Activated CD4-positive, alpha-beta T cell treated with anti-CD3 and anti-CD28 coated beads for 36 hours (primary cell): ENCODE measurements at regions of chr4 and their contacts with region 1.

Region 1: DNA sequence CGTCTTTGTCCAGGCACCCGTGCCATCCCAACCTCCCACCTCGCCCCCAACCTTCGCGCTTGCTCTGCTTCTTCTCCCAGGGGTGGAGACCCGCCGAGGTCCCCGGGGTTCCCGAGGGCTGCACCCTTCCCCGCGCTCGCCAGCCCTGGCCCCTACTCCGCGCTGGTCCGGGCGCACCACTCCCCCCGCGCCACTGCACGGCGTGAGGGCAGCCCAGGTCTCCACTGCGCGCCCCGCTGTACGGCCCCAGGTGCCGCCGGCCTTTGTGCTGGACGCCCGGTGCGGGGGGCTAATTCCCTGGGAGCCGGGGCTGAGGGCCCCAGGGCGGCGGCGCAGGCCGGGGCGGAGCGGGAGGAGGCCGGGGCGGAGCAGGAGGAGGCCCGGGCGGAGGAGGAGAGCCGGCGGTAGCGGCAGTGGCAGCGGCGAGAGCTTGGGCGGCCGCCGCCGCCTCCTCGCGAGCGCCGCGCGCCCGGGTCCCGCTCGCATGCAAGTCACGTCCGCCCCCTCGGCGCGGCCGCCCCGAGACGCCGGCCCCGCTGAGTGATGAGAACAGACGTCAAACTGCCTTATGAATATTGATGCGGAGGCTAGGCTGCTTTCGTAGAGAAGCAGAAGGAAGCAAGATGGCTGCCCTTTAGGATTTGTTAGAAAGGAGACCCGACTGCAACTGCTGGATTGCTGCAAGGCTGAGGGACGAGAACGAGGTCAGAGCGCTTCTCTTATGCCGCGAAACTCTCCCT is at the start of gene TET2:
- DNase-seq: peak; percentile 91
- ATAC-seq: peak; percentile 87
- H3K4me3 Mint-ChIP-seq: peak within 1 kb of the TSS; percentile 97
- H3K27ac Mint-ChIP-seq: peak within 1 kb of the TSS; percentile 98
- H3K4me1 Mint-ChIP-seq: peaks cover 40% of the 10 kb centered on the region
- H3K27me3 Mint-ChIP-seq: no peaks in the 10 kb centered on the region
- total RNA-seq, gene TET2: 35.0 to 40.6 TPM

Region 2: DNA sequence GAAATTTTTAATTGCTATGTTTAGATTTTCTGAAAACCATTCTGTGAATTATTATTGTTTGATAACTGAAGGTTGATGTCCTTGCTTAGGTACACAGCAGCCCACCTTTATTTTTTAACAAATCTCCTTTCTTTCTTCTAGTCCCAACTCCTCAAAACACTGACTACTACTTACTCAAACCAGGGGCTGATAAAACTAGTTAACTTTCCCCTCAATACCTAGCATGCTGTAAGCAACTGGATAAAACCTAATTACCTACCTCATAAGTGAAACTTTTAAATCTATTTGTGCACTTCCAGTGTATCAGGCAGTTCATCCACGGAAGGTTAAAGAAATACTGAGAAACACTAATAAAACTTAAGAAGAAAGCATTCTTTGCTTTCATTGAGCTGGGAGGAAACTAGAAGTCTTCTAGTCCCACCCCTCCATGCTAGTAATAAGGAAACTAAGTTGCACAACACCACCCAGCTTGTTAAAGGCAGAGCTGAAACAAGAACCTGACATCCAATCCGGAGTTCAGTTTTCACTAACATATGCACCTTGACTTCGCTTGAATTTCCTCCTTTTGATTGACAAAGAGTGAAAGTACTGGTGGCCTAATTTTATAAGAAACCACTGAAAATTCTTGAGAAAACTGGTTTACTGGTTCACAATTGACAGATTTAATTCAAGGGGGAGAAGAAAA is 180.0 kb before region 1 on chr4:
- CTCF ChIA-PET with region 1: no interaction called
- POLR2A ChIA-PET with region 1: no interaction called
- intact Hi-C with region 1: loop called in 1 of 2 experiments (anchors 2 kb)
- DNase-seq: peak; percentile 61
- ATAC-seq: peak; percentile 97
- H3K4me3 Mint-ChIP-seq: peak overlapping the region; percentile 43
- H3K27ac Mint-ChIP-seq: peak overlapping the region; percentile 98
- H3K4me1 Mint-ChIP-seq: peaks cover 18% of the 10 kb centered on the region
- H3K27me3 Mint-ChIP-seq: peaks cover 5% of the 10 kb centered on the region

Region 3: GRCh38 chr4:105191621-105192210 is 45.3 kb after region 1 on chr4:
- CTCF ChIA-PET with region 1: no interaction called
- POLR2A ChIA-PET with region 1: no interaction called
- intact Hi-C with region 1: loop called (anchors 1 to 2 kb)
- DNase-seq: peak; percentile 11
- ATAC-seq: peak; percentile 70
- H3K4me3 Mint-ChIP-seq: peak overlapping the region; percentile 12
- H3K27ac Mint-ChIP-seq: peak overlapping the region; percentile 90
- H3K4me1 Mint-ChIP-seq: peaks cover 94% of the 10 kb centered on the region
- H3K27me3 Mint-ChIP-seq: no peaks in the 10 kb centered on the region

Region 4: GRCh38 chr4:105215609-105216313 is 69.3 kb after region 1 on chr4:
- CTCF ChIA-PET with region 1: no interaction called
- POLR2A ChIA-PET with region 1: no interaction called
- intact Hi-C with region 1: loop called (anchors 2 kb)
- DNase-seq: no peak
- ATAC-seq: peak; percentile 95
- H3K4me3 Mint-ChIP-seq: peak overlapping the region; percentile 20
- H3K27ac Mint-ChIP-seq: peak overlapping the region; percentile 78
- H3K4me1 Mint-ChIP-seq: peaks cover 49% of the 10 kb centered on the region
- H3K27me3 Mint-ChIP-seq: no peaks in the 10 kb centered on the region

Region 5: DNA sequence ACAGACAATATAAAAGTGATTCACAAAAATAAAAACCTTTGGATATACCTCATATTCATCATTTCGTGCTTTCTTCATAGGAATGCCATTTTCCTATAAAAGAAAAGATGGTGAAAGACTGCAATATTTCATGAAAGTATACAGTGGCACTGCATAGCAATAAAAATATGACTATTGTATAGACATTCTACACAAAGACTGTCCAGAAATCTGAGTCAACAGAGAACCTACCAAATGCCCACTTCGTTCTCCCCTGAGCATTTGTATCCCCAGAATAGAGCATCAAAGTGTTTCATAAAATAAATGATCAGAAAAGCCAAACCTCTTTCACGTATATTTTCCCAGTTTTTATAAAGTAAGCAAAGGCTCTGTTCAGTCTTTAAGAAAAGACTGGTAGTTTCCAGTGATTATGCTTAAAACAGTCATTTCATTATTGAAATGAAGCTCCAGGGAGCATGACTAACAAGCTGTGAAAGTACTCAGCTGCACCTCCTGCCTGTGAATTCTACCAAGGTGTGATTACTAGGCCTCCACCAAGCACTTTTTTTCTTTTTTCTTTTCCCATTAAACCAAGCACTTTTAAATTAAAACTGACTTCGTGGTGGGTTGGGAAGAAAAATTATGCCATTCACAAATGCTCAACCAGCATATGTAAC is 307.2 kb after region 1 on chr4:
- CTCF ChIA-PET with region 1: no interaction called
- POLR2A ChIA-PET with region 1: no interaction called
- intact Hi-C with region 1: loop called (anchors 1 to 5 kb)
- DNase-seq: peak; percentile 60
- ATAC-seq: peak; percentile 99
- H3K4me3 Mint-ChIP-seq: no peak overlapping the region
- H3K27ac Mint-ChIP-seq: peak overlapping the region; percentile 62
- H3K4me1 Mint-ChIP-seq: peaks cover 34% of the 10 kb centered on the region
- H3K27me3 Mint-ChIP-seq: no peaks in the 10 kb centered on the region

Region 6: DNA sequence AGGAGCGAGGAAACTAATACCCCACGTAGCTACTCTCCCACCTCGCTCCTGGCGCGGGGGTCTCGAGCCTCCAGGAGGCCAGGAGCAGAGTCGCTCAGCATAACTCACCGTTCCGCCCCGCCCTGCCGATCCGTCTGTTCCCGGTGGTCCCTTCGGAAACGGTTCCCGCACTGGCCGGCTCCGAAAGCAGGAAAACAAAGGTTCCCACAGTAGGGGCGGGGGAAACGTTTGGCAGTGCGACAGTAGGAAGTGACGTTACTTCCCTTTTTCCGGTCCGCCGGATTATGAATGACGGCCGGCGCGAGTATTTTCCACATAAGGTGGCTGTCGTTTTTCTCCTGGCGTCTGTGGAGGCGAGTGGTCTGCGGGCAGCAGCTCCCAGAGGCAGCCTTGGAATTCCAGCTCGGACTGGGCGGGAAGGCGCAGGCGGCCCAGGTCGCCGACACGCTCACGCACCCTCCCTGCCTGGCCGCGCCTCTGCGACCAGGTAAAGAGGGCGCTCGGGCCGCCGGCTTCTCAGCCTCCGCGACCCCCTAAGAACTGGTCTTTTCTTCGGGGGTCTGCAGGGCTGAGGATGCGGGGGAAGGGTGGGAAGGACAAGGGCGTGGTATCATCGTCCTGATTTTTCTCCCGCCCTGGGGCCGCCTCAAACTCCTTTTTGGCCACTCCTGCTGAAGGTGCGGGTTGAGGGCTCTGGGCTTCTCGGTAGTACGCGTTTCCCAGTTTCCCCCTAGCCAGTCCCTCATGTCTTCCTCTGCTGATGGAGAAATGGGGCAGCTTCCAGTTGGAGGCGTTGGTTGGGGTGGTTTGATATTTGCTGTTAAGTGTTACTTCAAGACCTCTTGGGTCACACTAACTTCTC is 562.3 kb after region 1 on chr4 and contains the starts of genes GSTCD and INTS12:
- CTCF ChIA-PET with region 1: no interaction called
- POLR2A ChIA-PET with region 1: no interaction called
- intact Hi-C with region 1: loop called (anchors 2 to 5 kb)
- DNase-seq: peak; percentile 93
- ATAC-seq: peak; percentile 93
- H3K4me3 Mint-ChIP-seq: peak within 1 kb of the TSS; percentile 98
- H3K27ac Mint-ChIP-seq: peak within 1 kb of the TSS; percentile 96
- H3K4me1 Mint-ChIP-seq: peaks cover 26% of the 10 kb centered on the region
- H3K27me3 Mint-ChIP-seq: no peaks in the 10 kb centered on the region
- total RNA-seq, gene GSTCD: 16.1 to 16.3 TPM
- total RNA-seq, gene INTS12: 20.2 to 28.4 TPM

Region 7: DNA sequence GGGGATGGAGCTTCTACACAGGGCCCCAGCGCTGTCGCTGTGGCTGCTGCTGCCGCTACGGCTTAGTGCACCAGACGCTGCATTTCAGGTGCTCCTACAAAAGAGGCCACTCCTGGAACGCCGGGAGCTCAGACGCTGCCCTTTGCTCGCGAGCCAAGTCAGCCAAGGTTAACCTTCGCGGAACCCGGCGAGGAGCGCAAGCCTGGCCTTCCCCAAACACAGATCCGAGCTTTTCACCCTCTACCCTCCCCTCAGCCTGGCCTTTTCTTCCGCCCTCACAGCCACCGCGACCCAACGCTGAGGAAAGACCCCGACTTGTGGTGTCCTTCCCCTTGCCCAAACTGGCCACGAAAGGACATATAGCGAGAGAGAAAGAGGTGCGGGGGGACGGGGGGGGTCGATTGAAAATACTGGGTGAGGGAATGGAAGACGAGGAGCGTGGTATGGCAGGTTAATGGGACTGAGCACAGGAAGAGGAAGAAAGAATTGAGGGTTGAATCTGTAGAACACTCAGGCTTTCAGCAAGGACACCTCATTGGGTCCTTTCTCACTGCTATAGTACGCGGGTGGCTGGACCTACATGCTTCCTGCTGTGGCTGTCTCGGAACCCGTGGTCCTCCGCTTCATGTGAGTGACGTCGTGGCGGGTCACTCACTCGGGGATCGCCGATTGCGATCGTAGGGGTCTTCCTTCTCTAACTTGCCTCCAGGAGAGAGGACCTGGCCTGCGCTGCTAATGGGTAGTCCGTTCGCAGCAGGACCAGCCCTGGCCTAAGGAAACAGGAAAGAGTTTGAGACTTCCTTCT is 1169.7 kb after region 1 on chr4 and contains the starts of genes AIMP1 and TBCK:
- CTCF ChIA-PET with region 1: no interaction called
- POLR2A ChIA-PET with region 1: no interaction called
- intact Hi-C with region 1: loop called in 1 of 2 experiments (anchors 2 kb)
- DNase-seq: peak; percentile 91
- ATAC-seq: peak; percentile 83
- H3K4me3 Mint-ChIP-seq: no peak within 1 kb of the TSS
- H3K27ac Mint-ChIP-seq: no peak within 1 kb of the TSS
- H3K4me1 Mint-ChIP-seq: peaks cover 49% of the 10 kb centered on the region
- H3K27me3 Mint-ChIP-seq: no peaks in the 10 kb centered on the region
- total RNA-seq, gene AIMP1: 41.9 to 69.5 TPM
- total RNA-seq, gene TBCK: 22.5 to 25.1 TPM